AG04450 (cell line): ENCODE measurements at regions of chr1 and their contacts with region 1.

Region 1: GRCh38 chr1:34852677-34853217 is 6.8 kb downstream of the SMIM12 start:
- DNase-seq: peak; percentile 83
- H3K4me3 ChIP-seq: no peak overlapping the region
- H3K27ac ChIP-seq: peak overlapping the region; percentile 11
- H3K27me3 ChIP-seq: no peaks in the 10 kb centered on the region
- CTCF ChIP-seq: peak; percentile 93

Region 2: DNA sequence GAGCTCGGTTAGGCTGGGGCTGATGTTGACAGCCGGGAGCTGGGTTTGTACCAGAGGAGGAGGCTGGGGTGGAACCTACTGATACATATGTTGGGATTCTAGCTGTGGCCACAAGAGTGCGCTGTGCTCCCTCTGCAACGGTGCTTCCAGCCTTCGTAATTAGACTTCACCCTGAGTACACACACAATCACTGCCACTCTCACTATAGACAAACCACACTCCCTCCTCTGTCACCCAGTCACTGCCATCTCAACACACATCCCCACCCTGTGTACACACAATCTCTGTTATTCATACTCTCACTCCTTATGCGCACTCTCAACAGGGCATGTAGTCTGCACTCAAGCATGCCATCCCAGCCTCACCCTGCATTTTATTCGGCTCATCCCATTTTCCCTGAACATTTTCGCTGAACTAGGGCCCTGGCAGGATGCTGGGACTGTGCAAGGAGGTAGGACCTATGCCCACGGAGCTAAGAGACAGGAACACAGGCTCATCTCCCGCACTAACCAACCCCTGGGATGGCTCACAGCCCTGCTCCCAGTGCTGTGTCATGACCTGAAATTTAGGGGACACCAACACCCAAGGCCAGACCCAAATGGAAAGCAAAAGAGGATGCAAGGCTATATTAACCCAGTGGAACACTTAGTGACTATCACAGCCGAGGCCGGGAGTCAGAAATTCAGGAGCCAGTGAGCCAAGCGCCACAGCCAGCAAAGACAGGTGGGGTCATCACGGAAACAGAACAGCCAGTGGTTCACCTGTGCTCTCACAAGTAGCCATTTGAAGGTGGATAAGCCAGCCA is 66.0 kb before region 1 on chr1:
- CTCF ChIA-PET with region 1: interaction called, 25 read pairs
- POLR2A ChIA-PET with region 1: no interaction called
- DNase-seq: peak; percentile 29
- H3K4me3 ChIP-seq: no peak overlapping the region
- H3K27ac ChIP-seq: no peak overlapping the region
- H3K27me3 ChIP-seq: peaks cover 15% of the 10 kb centered on the region
- CTCF ChIP-seq: peak; percentile 85

Region 3: DNA sequence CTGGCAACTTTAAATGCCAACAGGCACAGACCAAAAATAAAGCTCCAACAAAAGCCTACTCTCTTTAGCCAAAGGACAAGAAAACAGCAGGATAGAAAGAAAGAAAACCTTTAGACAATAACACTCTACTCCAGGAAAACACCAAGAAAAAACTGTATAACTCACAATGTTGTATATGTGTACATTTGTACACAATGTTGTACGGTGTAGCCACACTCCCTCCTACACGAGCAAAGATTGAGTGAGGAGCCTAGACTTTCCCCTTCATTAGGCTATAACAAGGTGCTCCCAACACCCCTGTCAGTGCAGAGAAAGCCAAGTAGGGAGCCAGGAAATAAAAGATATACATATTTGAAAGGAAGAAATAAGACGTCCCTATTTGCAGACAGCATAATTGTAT is 36.0 kb before region 1 on chr1:
- CTCF ChIA-PET with region 1: interaction called, 13 read pairs
- POLR2A ChIA-PET with region 1: no interaction called
- DNase-seq: no peak
- H3K4me3 ChIP-seq: no peak overlapping the region
- H3K27ac ChIP-seq: no peak overlapping the region
- H3K27me3 ChIP-seq: no peaks in the 10 kb centered on the region
- CTCF ChIP-seq: no peak

Region 4: DNA sequence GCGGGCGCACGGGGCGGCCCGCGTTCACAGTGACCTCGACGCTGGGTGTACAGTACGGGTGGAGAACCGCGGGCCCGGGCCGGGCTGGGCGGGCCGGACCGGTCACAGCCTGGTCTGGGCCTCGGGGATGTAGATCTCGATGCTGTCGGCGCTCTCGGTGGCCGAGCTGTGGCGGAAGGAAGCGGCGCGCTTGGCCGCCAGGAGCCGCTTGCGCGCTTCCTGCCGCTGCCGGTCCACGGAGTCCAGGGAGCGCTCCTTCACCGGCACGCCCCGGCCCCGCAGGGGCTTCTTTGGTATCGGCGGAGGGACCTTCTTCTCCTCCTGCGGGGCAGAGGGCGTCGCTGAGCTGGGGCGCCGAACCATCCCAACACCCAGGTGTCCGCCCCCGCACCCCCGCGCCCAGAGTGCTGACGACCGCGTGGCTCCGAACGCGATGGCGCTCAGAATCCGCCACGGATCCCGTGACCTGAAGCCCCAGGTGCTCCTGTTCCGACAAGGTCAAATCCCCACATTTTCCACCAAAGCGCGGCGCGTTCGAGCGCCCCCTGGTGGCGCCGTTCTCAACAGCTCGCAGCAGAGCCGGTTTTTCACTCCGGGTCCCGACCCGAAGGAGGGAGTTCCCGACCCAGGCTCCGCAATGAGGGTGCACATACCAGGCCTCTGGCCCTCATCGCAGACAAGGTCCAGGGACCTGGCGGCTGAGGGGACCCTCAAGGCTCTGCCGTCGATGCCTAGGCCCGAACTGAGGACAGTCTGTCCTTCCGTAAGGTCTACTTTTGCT is 13.4 kb after region 1 on chr1:
- CTCF ChIA-PET with region 1: interaction called, 70 read pairs
- POLR2A ChIA-PET with region 1: no interaction called
- DNase-seq: peak; percentile 24
- H3K4me3 ChIP-seq: peak overlapping the region; percentile 74
- H3K27ac ChIP-seq: no peak overlapping the region
- H3K27me3 ChIP-seq: peaks cover 22% of the 10 kb centered on the region
- CTCF ChIP-seq: peak; percentile 94

Region 5: GRCh38 chr1:34874296-34874952 is 21.7 kb after region 1 on chr1:
- CTCF ChIA-PET with region 1: interaction called, 11 read pairs
- POLR2A ChIA-PET with region 1: no interaction called
- DNase-seq: no peak
- H3K4me3 ChIP-seq: no peak overlapping the region
- H3K27ac ChIP-seq: no peak overlapping the region
- H3K27me3 ChIP-seq: peaks cover 29% of the 10 kb centered on the region
- CTCF ChIP-seq: no peak

Region 6: DNA sequence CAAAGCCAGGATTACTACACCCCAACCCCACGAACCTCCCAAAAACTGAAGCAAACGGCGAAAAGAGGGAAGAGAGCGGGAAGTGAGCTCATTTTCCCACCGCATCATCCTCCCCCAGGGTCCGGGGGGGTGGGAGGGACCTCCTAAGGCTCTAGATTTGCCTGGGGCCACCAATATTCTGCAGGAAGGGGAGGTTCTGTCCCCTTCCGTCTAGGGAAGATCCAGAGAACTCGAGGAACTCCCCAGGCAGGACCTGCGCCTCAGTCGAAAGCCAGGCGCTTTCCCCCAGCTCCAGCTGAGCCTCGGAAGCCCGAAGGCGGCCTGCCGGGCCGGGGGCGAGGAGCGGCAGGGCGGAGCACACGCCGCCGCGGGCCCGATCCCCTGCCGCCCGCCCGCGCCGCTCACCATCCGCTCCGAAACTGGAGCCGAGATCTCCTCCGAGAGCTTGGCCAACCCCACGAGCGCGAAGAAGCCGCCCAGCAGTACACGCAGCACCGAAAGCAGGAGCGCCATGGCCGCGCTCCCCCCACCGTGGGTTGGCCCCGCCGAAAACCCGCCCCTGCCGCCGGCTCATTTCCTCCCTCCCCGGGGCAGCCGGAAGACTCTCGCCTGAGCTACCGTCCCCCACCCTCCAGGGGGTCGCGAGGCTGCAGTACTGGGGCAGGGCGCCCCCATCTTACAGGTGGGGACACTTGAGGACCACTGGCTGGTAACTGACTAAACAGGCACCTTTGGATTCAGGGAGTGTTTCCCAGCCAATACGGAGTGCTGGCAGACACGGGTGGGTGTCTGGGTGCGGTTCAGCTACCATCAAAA is 132.3 kb after region 1 on chr1 and contains the start of gene TMEM35B:
- CTCF ChIA-PET with region 1: interaction called, 23 read pairs
- POLR2A ChIA-PET with region 1: no interaction called
- DNase-seq: no peak
- H3K4me3 ChIP-seq: peak within 1 kb of the TSS; percentile 84
- H3K27ac ChIP-seq: peak within 1 kb of the TSS; percentile 71
- H3K27me3 ChIP-seq: no peaks in the 10 kb centered on the region
- CTCF ChIP-seq: peak; percentile 28
- polyA plus RNA-seq, gene TMEM35B: 36.8 and 37.8 TPM in 2 replicates